CD4-positive, alpha-beta T cell (primary cell): ENCODE measurements at regions of chr4 and their contacts with region 1.

Region 1: GRCh38 chr4:34432706-34433105 is 1811.6 kb downstream of the ARAP2 start:
- DNase-seq: no peak
- ATAC-seq: no peak
- H3K4me3 ChIP-seq: no peak overlapping the region
- H3K4me3 Mint-ChIP-seq: no peak overlapping the region
- H3K27ac ChIP-seq: no peak overlapping the region
- H3K27ac Mint-ChIP-seq: no peak overlapping the region
- H3K4me1 ChIP-seq: no peaks in the 10 kb centered on the region
- H3K4me1 Mint-ChIP-seq: no peaks in the 10 kb centered on the region
- H3K27me3 ChIP-seq: no peaks in the 10 kb centered on the region
- H3K27me3 Mint-ChIP-seq: no peaks in the 10 kb centered on the region
- CTCF ChIP-seq: no peak

Region 2: DNA sequence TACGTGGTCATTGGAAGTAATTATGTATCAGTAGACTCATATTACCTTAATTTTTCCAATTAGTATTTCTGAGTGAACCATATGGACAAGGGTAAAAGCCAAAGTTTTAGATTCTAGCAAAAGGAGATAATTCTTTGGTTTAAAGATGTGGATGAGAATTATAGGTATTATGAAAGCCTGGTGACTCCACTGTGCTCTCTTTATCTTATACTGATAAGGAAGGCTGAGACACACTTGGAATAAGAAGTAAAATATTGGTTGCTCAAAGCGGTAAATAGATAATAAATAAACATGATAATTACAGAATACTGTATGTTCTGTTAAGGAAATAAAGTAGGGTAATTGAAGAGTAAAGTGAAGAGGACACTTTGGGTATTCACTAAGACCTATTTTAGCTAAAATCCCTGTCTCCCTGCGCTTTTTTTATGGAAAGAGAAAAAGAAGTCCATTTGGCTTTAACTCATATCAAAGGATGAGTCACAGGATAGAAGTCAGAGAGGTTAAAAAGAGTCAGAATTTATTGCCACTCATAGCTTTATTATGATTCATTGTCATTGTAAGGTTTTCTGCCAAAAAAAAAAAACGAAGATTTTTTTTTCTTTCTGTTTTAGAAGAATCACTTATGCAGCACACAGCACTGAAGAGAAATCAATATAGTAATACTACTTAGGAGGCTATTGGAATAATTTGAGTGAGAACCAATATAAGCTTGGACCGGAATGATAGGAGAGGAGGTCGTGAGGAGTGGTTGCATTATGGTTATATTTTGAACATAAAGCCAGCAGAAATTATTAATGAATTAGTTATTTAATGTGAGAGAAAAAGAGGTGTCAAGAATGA is 651.5 kb before region 1 on chr4:
- CTCF ChIA-PET with region 1: no interaction called
- POLR2A ChIA-PET with region 1: no interaction called
- intact Hi-C with region 1: loop called in 1 of 2 experiments (anchors 10 kb)
- DNase-seq: no peak
- ATAC-seq: no peak
- H3K4me3 ChIP-seq: no peak overlapping the region
- H3K4me3 Mint-ChIP-seq: no peak overlapping the region
- H3K27ac ChIP-seq: no peak overlapping the region
- H3K27ac Mint-ChIP-seq: no peak overlapping the region
- H3K4me1 ChIP-seq: no peaks in the 10 kb centered on the region
- H3K4me1 Mint-ChIP-seq: no peaks in the 10 kb centered on the region
- H3K27me3 ChIP-seq: no peaks in the 10 kb centered on the region
- H3K27me3 Mint-ChIP-seq: no peaks in the 10 kb centered on the region
- CTCF ChIP-seq: no peak

Region 3: DNA sequence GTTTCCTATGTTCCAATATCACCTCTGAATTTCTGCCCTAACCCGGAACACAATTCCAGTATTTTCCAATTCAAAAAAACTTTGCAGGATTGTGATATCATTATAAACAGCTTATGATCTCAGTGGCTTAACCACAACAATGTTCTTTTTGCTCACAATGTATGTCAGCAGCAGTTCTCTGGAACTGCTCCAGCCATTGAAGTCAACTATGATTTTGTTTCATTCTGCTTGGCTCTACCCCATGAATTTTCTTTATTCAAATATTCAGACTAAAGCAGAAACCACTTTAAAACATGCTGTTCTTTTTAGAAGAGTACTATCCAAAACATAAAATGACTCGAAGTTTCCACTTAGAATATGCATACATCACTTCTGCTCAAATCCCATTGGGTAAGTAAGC is 200.5 kb after region 1 on chr4:
- CTCF ChIA-PET with region 1: no interaction called
- POLR2A ChIA-PET with region 1: no interaction called
- intact Hi-C with region 1: no loop called
- DNase-seq: no peak
- ATAC-seq: no peak
- H3K4me3 ChIP-seq: no peak overlapping the region
- H3K4me3 Mint-ChIP-seq: no peak overlapping the region
- H3K27ac ChIP-seq: no peak overlapping the region
- H3K27ac Mint-ChIP-seq: no peak overlapping the region
- H3K4me1 ChIP-seq: no peaks in the 10 kb centered on the region
- H3K4me1 Mint-ChIP-seq: no peaks in the 10 kb centered on the region
- H3K27me3 ChIP-seq: no peaks in the 10 kb centered on the region
- H3K27me3 Mint-ChIP-seq: no peaks in the 10 kb centered on the region
- CTCF ChIP-seq: no peak